Motor neuron (in vitro differentiated cells): ENCODE measurements at regions of chr12 and their contacts with region 1.

Region 1: DNA sequence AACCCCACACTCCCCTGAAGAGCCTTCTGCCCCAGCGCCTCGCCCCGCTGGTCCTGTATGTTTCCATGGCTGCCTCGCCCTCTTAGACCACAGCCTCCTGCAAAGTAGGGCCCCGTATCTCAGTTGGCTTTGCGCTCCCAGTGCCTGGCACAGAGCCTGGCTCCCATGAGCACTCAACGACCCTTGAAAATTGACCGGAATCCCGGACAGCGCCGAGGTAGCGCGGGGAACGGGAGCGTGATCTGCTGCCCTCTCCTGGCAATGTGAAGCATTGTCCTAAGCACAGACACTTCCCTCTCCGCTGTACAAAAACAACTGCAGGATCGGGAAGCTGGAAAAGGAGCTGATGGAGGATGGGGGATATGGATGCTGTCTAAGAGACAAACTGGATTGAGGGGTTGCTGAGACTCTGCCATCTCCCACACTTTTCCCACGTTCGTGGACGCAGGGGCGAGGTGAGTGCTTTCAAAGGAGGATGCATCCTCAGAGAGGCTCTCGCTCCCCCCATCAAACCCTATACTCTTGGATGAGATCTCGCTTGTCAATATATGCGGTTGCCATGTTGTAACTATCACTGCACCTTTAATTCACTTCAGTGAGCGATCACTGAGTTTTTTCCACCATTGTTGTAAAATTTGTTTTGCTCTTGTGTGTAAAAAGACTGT is 10.7 kb upstream of the FKBP4 start:
- ATAC-seq: peak; percentile 72 to 97 (median 94)
- H3K4me3 ChIP-seq: peak overlapping the region in 4 of 5 donors; percentile 10 to 23 (median 15)
- H3K27ac ChIP-seq: no peak overlapping the region
- H3K4me1 ChIP-seq: peaks cover 0 to 2% of the 10 kb centered on the region in 2 donors

Region 2: DNA sequence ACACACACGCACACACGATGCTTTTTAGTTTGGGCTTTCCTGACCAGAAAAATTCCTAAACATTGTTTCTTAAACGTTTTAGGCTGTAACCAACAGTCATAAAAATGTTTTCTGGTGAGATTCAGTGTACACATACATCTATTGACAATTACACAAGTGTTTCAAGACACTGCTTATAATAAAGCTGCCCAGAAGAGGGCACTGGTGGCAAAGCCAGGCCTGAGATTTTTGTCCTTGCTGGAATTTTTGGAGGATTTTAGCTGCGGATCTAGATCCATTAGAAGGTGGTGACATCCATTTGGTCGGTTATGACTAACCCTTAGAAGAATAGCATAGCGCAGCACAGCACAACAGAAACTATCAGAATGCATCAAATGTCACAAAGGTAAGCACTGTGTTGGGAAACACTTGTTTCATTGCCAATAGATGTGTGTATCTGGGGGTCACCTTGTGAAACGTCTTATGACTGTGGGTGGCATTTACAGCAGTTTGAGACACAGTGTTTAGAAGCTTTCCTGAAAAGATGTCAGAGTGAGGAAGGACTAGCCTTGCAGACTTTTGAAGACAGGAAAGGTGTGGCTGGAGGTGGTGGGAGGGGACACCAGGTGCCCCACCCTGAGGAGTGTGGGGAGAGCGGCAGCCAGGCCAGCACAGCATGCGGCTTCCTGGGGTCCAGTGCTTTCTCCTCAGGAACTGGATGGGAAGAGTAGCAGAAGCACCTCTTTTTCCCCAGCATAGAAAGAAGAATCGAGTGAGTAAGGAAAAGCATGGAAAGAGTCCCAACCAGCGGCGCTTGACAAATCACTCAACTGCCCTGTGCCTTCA is 44.0 kb before region 1 on chr12:
- in situ Hi-C with region 1: loop called in 1 of 9 experiments (anchors 10 kb)
- ATAC-seq: peak in 5 of 8 experiments; percentile 25 to 81 (median 62)
- H3K4me3 ChIP-seq: no peak overlapping the region
- H3K27ac ChIP-seq: no peak overlapping the region
- H3K4me1 ChIP-seq: no peaks in the 10 kb centered on the region

Region 3: GRCh38 chr12:3014641-3015040 is 230.6 kb after region 1 on chr12:
- in situ Hi-C with region 1: no loop called
- ATAC-seq: no peak
- H3K4me3 ChIP-seq: no peak overlapping the region
- H3K27ac ChIP-seq: no peak overlapping the region
- H3K4me1 ChIP-seq: no peaks in the 10 kb centered on the region

Region 4: GRCh38 chr12:3202734-3203446 is 418.8 kb after region 1 on chr12:
- in situ Hi-C with region 1: no loop called
- ATAC-seq: no peak
- H3K4me3 ChIP-seq: no peak overlapping the region
- H3K27ac ChIP-seq: no peak overlapping the region
- H3K4me1 ChIP-seq: peaks cover 46 to 55% of the 10 kb centered on the region in 2 donors